ENCODE measurements at regions of chr4 and their contacts with region 1.

Region 1: DNA sequence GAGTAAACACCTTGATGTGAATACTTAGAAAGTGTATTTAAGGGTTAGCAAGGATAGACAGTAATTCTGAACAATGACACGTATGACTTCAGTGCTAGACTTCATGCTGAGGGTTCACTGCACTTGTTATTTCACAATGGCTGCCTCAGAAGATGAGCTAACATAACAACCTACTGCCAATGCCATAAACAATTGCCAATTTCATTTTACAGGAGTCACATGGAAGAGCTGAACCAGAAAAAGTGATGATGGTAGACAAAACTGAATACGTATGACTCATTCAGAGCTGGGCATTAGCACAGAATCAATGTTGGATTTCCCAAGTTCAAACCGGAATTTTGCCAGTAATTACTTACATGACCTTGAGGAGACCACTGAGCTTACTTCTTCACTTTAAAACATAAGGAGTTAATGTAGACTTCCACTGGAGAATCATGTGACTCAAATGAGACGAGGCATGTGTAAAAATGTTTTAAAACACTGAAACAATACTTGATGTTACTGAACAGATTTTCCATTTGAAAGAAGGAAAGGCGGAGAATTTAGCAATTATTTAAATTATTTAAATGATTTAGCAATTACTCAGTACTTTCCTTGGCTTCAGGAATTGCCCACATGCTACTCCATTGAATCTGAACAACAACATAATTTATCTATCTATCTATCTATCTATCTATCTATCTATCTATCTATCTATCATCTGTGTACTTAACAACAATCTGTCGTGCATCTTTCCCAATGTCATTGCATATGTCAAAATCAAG is 868.5 kb upstream of the SLIT2 start:
- DNase-seq: peak; percentile 89
- H3K4me3 Mint-ChIP-seq: no peak overlapping the region
- H3K27ac Mint-ChIP-seq: peak overlapping the region; percentile 90
- H3K4me1 Mint-ChIP-seq: peaks cover 35% of the 10 kb centered on the region
- H3K27me3 Mint-ChIP-seq: no peaks in the 10 kb centered on the region
- CTCF ChIP-seq: no peak

Region 2: DNA sequence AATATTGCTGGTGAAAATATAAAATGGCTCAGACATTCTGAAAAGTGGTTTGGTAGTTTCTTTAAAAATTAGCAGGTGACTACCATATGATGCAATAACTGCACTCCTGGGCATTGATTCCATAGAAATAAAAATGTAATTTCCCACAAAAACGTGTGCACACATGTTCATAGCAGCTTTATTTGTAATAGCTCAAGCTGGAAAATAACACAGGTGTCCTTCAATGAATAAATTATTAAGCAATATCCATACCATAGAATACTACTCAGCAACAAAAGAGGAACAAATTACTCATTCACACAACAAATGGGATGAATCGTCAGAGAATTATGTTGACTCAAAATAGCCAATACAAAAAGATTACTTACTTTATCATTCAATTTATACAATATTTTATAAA is 25.2 kb before region 1 on chr4:
- CTCF ChIA-PET with region 1: no interaction called
- POLR2A ChIA-PET with region 1: interaction called, 3 read pairs
- intact Hi-C with region 1: loop called (anchors 1 kb)
- DNase-seq: peak; percentile 80
- H3K4me3 Mint-ChIP-seq: no peak overlapping the region
- H3K27ac Mint-ChIP-seq: peak overlapping the region; percentile 81
- H3K4me1 Mint-ChIP-seq: peaks cover 8% of the 10 kb centered on the region
- H3K27me3 Mint-ChIP-seq: no peaks in the 10 kb centered on the region
- CTCF ChIP-seq: no peak

Region 3: GRCh38 chr4:19596342-19596741 is 213.2 kb after region 1 on chr4:
- CTCF ChIA-PET with region 1: no interaction called
- POLR2A ChIA-PET with region 1: no interaction called
- intact Hi-C with region 1: no loop called
- DNase-seq: no peak
- H3K4me3 Mint-ChIP-seq: no peak overlapping the region
- H3K27ac Mint-ChIP-seq: no peak overlapping the region
- H3K4me1 Mint-ChIP-seq: no peaks in the 10 kb centered on the region
- H3K27me3 Mint-ChIP-seq: no peaks in the 10 kb centered on the region
- CTCF ChIP-seq: no peak